HEK293 (cell line): ENCODE measurements at regions of chr2 and their contacts with region 1.

Region 1: GRCh38 chr2:207974216-207974605 is 51.1 kb downstream of the PLEKHM3 start:
- H3K4me3 ChIP-seq: no peak overlapping the region
- H3K27ac ChIP-seq: no peak overlapping the region
- H3K4me1 ChIP-seq: peaks cover 14% of the 10 kb centered on the region
- CTCF ChIP-seq: no peak

Region 2: DNA sequence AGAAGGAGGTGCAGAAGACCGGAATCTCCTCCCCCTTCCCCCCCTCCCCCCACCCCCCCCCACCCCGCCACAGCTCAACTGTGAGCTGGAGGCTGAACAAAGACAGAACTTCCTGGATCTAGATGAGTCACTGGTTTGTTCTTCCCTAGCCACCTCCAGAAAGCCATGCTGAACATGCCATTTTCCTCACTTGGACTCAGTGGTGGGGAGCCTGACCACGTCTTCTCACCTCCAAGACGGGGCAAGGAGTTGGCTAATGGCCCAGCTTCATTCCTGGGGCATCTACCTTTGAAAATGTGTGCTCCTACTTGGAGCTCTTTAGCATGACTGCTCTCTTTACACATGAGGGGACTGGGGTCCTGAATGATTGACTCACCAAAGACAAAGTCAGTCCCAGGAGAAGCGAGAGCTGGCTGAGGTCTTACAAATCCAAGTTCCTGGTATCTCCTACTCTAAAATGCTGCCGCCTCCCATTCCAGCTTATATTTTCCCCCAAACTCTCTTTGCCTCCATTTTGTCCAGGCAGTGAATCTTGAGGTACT is 181.9 kb before region 1 on chr2:
- CTCF ChIA-PET with region 1: interaction called, 11 read pairs
- POLR2A ChIA-PET with region 1: no interaction called
- H3K4me3 ChIP-seq: no peak overlapping the region
- H3K27ac ChIP-seq: peak overlapping the region; percentile 41; the same call in 1 of the 2 replicates
- H3K4me1 ChIP-seq: peaks cover 8% of the 10 kb centered on the region
- CTCF ChIP-seq: no peak

Region 3: GRCh38 chr2:207951734-207952470 is 22.3 kb before region 1 on chr2:
- CTCF ChIA-PET with region 1: interaction called, 12 read pairs
- POLR2A ChIA-PET with region 1: no interaction called
- H3K4me3 ChIP-seq: no peak overlapping the region
- H3K27ac ChIP-seq: no peak overlapping the region
- H3K4me1 ChIP-seq: peaks cover 3% of the 10 kb centered on the region
- CTCF ChIP-seq: no peak

Region 4: GRCh38 chr2:207987025-207987716 is 13.0 kb after region 1 on chr2:
- CTCF ChIA-PET with region 1: interaction called, 11 read pairs
- POLR2A ChIA-PET with region 1: no interaction called
- H3K4me3 ChIP-seq: no peak overlapping the region
- H3K27ac ChIP-seq: no peak overlapping the region
- H3K4me1 ChIP-seq: no peaks in the 10 kb centered on the region
- CTCF ChIP-seq: no peak

Region 5: GRCh38 chr2:207995887-207996286 is 21.7 kb after region 1 on chr2:
- CTCF ChIA-PET with region 1: interaction called, 15 read pairs
- POLR2A ChIA-PET with region 1: interaction called, 4 read pairs
- H3K4me3 ChIP-seq: no peak overlapping the region
- H3K27ac ChIP-seq: no peak overlapping the region
- H3K4me1 ChIP-seq: no peaks in the 10 kb centered on the region
- CTCF ChIP-seq: no peak

Region 6: GRCh38 chr2:208040199-208041171 is 66.3 kb after region 1 on chr2:
- CTCF ChIA-PET with region 1: interaction called, 27 read pairs
- POLR2A ChIA-PET with region 1: no interaction called
- H3K4me3 ChIP-seq: no peak overlapping the region
- H3K27ac ChIP-seq: no peak overlapping the region
- H3K4me1 ChIP-seq: no peaks in the 10 kb centered on the region
- CTCF ChIP-seq: peak; percentile 70

Region 7: GRCh38 chr2:208515099-208515498 is 540.9 kb after region 1 on chr2:
- CTCF ChIA-PET with region 1: no interaction called
- POLR2A ChIA-PET with region 1: no interaction called
- H3K4me3 ChIP-seq: no peak overlapping the region
- H3K27ac ChIP-seq: no peak overlapping the region
- H3K4me1 ChIP-seq: no peaks in the 10 kb centered on the region
- CTCF ChIP-seq: no peak